ENCODE measurements at regions of chr7 and their contacts with region 1.

Region 1: DNA sequence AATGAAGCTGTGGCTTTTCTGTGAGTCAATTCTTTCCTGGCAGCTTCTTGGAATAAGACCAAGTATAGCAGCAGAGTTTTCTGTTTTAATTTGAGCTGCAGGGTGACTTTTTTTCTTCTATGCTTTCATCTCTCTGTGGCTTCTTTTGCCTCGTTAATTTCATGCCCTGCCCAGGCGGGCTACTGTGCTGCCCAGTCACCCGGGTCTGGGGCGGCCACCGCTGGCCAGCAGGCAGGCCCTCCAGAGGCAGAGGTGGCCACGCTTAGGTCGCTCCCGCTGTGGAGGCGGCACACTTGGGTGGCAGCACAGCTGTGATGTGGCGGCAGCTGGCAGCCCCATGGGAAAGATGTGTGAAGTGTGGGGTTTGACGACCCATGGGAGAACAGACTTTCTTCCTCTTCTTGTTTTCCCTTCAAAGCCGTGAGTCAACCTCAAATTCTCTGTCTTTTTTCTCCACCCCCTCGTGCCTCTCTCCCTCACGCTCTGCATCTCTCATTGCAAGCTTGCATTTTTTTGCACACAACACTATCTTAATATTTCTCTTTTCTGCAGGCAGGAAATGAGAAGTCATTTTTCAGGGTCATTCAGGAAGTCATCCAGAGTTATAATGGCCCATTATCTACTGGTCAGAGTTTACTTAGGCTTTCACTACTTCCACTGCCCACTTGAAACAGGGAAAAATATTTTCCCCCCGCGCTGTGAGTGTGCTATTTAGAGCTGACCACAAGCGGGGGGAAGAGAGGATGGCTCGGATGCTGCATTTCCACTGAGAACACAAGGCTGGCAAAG is 67.8 kb downstream of the EGFR start:
- DNase-seq: peak; percentile 78
- H3K4me3 Mint-ChIP-seq: peak overlapping the region; percentile 68
- H3K27ac Mint-ChIP-seq: peak overlapping the region; percentile 54
- H3K4me1 Mint-ChIP-seq: peaks cover 58% of the 10 kb centered on the region
- H3K27me3 Mint-ChIP-seq: no peaks in the 10 kb centered on the region
- CTCF ChIP-seq: no peak

Region 2: GRCh38 chr7:55110661-55111361 is 24.2 kb after region 1 on chr7:
- CTCF ChIA-PET with region 1: interaction called, 3 read pairs
- POLR2A ChIA-PET with region 1: interaction called, 10 read pairs
- intact Hi-C with region 1: no loop called
- DNase-seq: no peak
- H3K4me3 Mint-ChIP-seq: peak overlapping the region; percentile 21
- H3K27ac Mint-ChIP-seq: peak overlapping the region; percentile 84
- H3K4me1 Mint-ChIP-seq: peaks cover 55% of the 10 kb centered on the region
- H3K27me3 Mint-ChIP-seq: no peaks in the 10 kb centered on the region
- CTCF ChIP-seq: no peak